ENCODE measurements at regions of chr4 and their contacts with region 1.

Region 1: DNA sequence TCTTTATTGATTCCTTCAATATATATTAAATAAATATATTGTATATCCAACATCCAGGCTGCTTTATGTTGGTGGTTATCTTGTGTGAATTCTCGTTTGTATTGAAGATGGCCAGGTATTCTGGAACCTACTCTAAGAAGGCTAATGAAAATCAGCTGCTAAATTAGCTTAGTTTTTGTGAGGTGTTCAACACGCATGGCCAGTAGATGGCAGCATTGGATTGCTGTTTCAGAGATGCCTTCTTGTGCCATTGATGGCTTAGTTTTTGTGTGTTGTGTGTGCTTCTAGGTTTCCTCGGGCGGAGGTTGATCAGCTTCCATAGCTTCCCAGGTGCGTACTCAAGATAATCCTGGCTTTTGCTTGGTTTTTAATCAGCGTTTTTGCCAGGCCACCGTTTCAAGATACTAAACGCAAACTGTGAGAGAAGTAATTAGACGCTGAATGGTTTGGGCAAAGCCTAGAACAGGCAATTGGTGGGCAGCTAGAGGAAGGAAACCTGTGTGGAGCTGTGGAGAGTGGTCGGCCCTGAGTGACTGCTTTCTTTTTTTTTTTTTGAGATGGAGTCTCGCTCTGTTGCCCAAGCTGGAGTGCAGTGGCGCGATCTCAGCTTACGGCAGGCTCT is 15.1 kb downstream of the NOCT start:
- DNase-seq: peak; percentile 78
- H3K4me3 Mint-ChIP-seq: no peak overlapping the region
- H3K27ac Mint-ChIP-seq: no peak overlapping the region
- H3K4me1 Mint-ChIP-seq: peaks cover 10% of the 10 kb centered on the region
- H3K27me3 Mint-ChIP-seq: no peaks in the 10 kb centered on the region

Region 2: GRCh38 chr4:139042981-139043460 is 12.3 kb after region 1 on chr4:
- CTCF ChIA-PET with region 1: interaction called, 44 read pairs
- POLR2A ChIA-PET with region 1: no interaction called
- intact Hi-C with region 1: no loop called
- DNase-seq: no peak
- H3K4me3 Mint-ChIP-seq: no peak overlapping the region
- H3K27ac Mint-ChIP-seq: no peak overlapping the region
- H3K4me1 Mint-ChIP-seq: peaks cover 7% of the 10 kb centered on the region
- H3K27me3 Mint-ChIP-seq: no peaks in the 10 kb centered on the region

Region 3: GRCh38 chr4:139083956-139084803 is 53.5 kb after region 1 on chr4:
- CTCF ChIA-PET with region 1: interaction called, 56 read pairs
- POLR2A ChIA-PET with region 1: interaction called, 3 read pairs
- intact Hi-C with region 1: loop called (anchors 2 kb)
- DNase-seq: peak; percentile 90
- H3K4me3 Mint-ChIP-seq: peak overlapping the region; percentile 98
- H3K27ac Mint-ChIP-seq: peak overlapping the region; percentile 99
- H3K4me1 Mint-ChIP-seq: peaks cover 36% of the 10 kb centered on the region
- H3K27me3 Mint-ChIP-seq: no peaks in the 10 kb centered on the region

Region 4: DNA sequence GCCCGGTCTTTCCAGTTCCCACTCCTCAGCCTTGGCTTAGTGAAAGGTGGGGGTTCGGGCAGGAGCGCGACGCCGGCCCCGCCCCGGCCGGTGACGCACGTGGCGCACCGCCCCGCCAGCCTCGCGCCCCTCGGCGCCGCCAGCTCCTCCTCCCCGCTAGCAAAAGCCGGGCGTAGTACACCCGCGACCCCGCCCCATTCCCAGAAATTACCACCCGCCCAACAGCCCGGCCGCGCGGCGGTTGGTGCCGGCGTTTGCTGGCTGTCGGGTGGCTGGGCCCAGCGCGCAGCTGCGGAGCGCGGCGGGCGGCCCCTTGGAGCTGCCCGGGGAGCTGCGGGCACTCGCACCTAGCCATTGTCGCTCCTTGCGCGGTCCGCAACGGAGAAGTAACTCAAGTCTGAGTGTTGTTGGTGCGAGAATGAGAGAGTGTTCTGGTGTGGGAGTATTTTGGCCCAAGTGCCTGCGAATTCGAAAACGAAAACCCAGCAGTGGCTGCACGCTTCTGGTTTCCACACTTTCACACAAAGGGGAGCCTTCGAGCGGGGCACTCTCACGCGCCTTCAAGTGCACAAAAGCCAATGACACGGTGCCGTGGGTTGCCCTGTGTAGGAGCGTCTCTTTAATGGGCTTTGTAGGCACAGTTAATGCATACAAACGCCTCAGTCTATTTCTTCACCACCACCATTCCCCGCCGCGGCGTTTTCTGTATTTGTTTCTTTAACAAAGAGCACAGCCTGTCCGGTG is 147.3 kb after region 1 on chr4:
- CTCF ChIA-PET with region 1: interaction called, 5 read pairs
- POLR2A ChIA-PET with region 1: no interaction called
- intact Hi-C with region 1: loop called (anchors 5 kb)
- DNase-seq: peak; percentile 95
- H3K4me3 Mint-ChIP-seq: peak overlapping the region; percentile 80
- H3K27ac Mint-ChIP-seq: peak overlapping the region; percentile 78
- H3K4me1 Mint-ChIP-seq: peaks cover 22% of the 10 kb centered on the region
- H3K27me3 Mint-ChIP-seq: peaks cover 4% of the 10 kb centered on the region

Region 5: GRCh38 chr4:139295206-139295941 is 264.6 kb after region 1 on chr4:
- CTCF ChIA-PET with region 1: interaction called, 24 read pairs
- POLR2A ChIA-PET with region 1: interaction called, 3 read pairs
- intact Hi-C with region 1: loop called (anchors 1 kb)
- DNase-seq: peak; percentile 97
- H3K4me3 Mint-ChIP-seq: peak overlapping the region; percentile 93
- H3K27ac Mint-ChIP-seq: peak overlapping the region; percentile 94
- H3K4me1 Mint-ChIP-seq: peaks cover 29% of the 10 kb centered on the region
- H3K27me3 Mint-ChIP-seq: no peaks in the 10 kb centered on the region

Region 6: GRCh38 chr4:139530833-139531427 is 500.2 kb after region 1 on chr4:
- CTCF ChIA-PET with region 1: interaction called, 10 read pairs
- POLR2A ChIA-PET with region 1: no interaction called
- intact Hi-C with region 1: no loop called
- DNase-seq: peak; percentile 61
- H3K4me3 Mint-ChIP-seq: no peak overlapping the region
- H3K27ac Mint-ChIP-seq: no peak overlapping the region
- H3K4me1 Mint-ChIP-seq: peaks cover under 1% of the 10 kb centered on the region
- H3K27me3 Mint-ChIP-seq: no peaks in the 10 kb centered on the region